AG04450 (cell line): ENCODE measurements at regions of chr19 and their contacts with region 1.

Region 1: GRCh38 chr19:6811906-6812305 is 39.4 kb downstream of the VAV1 start:
- DNase-seq: no peak
- H3K4me3 ChIP-seq: no peak overlapping the region
- H3K27ac ChIP-seq: no peak overlapping the region
- H3K27me3 ChIP-seq: no peaks in the 10 kb centered on the region
- CTCF ChIP-seq: no peak

Region 2: DNA sequence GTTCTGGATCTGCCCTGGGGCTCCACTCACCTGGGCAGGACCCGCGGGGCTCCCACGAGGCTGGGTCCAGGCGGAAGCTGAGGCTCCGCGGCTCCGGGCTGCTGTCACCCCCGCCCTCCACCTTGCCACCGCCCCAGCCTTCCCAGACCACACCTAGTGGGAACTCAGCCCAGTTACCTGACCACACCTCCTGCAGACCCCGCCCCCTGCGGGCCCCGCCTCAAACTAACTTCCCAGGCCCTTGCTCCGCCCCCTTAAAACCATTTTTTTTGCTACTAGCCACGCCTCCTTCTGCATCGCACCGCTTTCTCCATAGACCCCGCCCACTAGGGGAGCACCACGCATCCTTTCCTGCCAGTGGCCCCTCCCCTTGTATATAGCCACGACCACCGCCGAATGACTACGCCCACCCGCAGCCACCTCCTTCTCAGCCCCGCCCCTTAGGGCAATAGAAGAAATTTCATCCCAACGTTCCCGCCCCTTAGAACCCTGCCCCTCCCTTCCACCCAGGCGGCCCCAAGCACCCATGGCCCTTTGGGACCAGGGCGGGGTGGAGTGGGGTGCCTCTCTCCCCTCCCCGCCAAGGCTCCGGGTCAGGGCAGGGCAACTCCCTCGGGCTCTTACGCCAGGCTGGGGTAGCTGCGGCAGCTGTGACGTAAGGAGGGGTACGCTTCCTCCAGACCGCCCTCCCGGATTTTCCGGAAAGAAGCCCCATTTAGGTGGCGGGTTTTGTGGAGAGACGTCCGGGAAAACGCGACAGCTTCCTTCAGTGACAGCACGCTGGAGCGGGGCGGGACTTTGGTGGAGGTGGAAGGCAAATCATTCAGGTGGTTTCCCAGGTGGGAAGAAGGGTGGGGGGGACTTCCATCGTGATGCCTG is 44.3 kb before region 1 on chr19 and contains the start of gene SH2D3A:
- CTCF ChIA-PET with region 1: no interaction called
- POLR2A ChIA-PET with region 1: interaction called, 11 read pairs
- DNase-seq: no peak
- H3K4me3 ChIP-seq: peak within 1 kb of the TSS; percentile 10
- H3K27ac ChIP-seq: no peak within 1 kb of the TSS
- H3K27me3 ChIP-seq: peaks cover 7% of the 10 kb centered on the region
- CTCF ChIP-seq: no peak
- polyA plus RNA-seq, gene SH2D3A: not detected in 2 replicates

Region 3: GRCh38 chr19:6911516-6911915 is 99.6 kb after region 1 on chr19:
- CTCF ChIA-PET with region 1: no interaction called
- POLR2A ChIA-PET with region 1: no interaction called
- DNase-seq: no peak
- H3K4me3 ChIP-seq: no peak overlapping the region
- H3K27ac ChIP-seq: no peak overlapping the region
- H3K27me3 ChIP-seq: no peaks in the 10 kb centered on the region
- CTCF ChIP-seq: no peak

Region 4: DNA sequence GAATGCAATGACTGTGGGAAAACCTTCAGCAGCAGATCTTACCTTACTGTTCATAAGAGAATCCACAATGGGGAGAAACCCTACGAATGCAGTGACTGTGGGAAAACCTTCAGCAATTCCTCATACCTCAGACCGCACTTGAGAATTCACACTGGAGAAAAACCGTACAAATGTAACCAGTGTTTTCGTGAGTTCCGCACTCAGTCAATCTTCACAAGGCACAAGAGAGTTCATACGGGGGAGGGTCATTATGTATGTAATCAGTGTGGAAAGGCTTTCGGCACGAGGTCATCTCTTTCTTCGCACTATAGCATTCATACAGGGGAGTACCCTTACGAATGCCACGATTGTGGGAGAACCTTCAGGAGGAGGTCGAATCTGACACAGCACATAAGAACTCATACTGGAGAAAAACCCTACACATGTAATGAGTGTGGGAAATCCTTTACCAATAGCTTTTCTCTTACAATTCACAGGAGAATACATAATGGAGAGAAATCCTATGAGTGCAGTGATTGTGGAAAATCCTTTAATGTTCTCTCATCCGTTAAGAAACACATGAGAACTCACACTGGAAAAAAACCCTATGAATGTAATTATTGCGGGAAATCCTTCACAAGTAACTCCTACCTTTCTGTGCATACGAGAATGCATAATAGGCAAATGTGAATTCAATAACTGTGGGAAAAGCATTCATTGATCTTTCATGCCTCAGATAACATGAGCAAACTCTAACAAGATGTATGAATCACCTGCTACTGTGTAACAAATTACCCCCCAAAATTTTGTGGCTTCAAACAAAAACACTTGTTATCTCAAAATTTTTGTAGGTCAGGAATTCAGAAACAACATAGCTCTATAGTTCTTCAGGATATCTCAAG is 271.4 kb after region 1 on chr19:
- CTCF ChIA-PET with region 1: no interaction called
- POLR2A ChIA-PET with region 1: no interaction called
- DNase-seq: no peak
- H3K4me3 ChIP-seq: no peak overlapping the region
- H3K27ac ChIP-seq: no peak overlapping the region
- H3K27me3 ChIP-seq: no peaks in the 10 kb centered on the region
- CTCF ChIP-seq: no peak